ENCODE measurements at regions of chr6 and their contacts with region 1.

Region 1: GRCh38 chr6:43817192-43817591 is 47.2 kb downstream of the VEGFA start:
- DNase-seq: peak; percentile 27 to 61
- H3K4me3 ChIP-seq: no peak overlapping the region
- H3K27ac ChIP-seq: no peak overlapping the region
- H3K4me1 ChIP-seq: no peaks in the 10 kb centered on the region
- H3K27me3 ChIP-seq: no peaks in the 10 kb centered on the region
- CTCF ChIP-seq: peak; percentile 70 to 76 (median 73)
- EP300 ChIP-seq: no peak
- POLR2A ChIP-seq: no peak
- RAD21 ChIP-seq: peak; percentile 49 to 61

Region 2: DNA sequence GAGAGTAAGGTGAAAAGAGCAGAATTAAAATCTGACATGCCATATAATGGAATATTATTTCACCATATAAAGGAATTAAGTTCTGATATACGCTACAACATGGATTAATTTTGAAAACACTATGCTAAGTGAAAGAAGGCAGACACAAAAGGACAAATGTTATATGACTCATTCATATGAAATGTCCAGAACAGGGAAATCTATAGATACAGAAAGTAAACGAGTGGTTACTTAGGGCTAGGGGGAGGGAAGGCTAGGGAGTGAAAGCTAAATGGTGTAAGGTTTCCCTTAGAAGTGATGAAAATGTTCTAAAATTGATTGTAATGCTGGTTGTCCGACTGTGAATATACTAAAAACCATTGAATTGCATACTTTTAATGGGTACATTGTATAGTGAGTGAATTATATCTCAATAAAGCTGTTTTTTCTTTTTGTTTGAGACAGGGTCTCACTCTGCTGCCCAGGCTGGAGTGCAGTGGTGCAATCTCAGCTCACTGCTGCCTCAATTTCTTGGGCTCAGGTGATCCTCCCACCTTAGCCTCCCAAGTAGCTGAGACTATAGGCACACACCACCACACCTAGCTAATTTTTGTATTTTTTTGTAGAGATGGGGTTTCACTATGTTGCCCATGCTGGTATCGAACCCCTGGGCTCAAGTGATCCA is 1103.0 kb before region 1 on chr6:
- CTCF ChIA-PET with region 1: no interaction called
- POLR2A ChIA-PET with region 1: no interaction called
- DNase-seq: no peak
- H3K4me3 ChIP-seq: no peak overlapping the region
- H3K27ac ChIP-seq: no peak overlapping the region
- H3K4me1 ChIP-seq: peaks cover 2 to 7% (median 4%) of the 10 kb centered on the region in 4 experiments; a peak in 4 of 7 replicates
- H3K27me3 ChIP-seq: no peaks in the 10 kb centered on the region; a peak in 1 of 7 replicates
- CTCF ChIP-seq: no peak
- EP300 ChIP-seq: no peak
- POLR2A ChIP-seq: no peak
- RAD21 ChIP-seq: no peak

Region 3: DNA sequence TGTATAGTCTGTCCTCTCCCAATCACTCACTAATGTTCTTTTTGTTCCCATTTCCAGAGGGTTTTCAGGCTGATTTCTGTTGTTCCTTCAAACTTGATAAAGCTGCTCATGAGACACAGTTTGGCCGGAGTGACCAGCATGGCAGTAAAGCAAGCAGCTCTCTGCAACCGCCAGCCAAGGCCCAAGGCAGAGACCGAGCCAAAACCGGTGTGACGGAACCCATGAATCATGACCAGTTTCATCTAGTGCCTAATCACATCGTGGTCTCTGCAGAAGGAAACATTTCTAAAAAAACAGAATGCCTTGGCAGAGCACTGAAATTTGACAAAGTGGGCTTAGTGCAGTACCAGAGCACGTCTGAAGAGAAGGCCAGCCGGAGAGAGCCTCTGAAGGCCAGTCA is 952.6 kb before region 1 on chr6:
- CTCF ChIA-PET with region 1: no interaction called
- POLR2A ChIA-PET with region 1: no interaction called
- DNase-seq: no peak
- H3K4me3 ChIP-seq: no peak overlapping the region
- H3K27ac ChIP-seq: no peak overlapping the region
- H3K4me1 ChIP-seq: no peaks in the 10 kb centered on the region
- H3K27me3 ChIP-seq: no peaks in the 10 kb centered on the region
- CTCF ChIP-seq: no peak
- EP300 ChIP-seq: no peak
- POLR2A ChIP-seq: no peak
- RAD21 ChIP-seq: no peak

Region 4: DNA sequence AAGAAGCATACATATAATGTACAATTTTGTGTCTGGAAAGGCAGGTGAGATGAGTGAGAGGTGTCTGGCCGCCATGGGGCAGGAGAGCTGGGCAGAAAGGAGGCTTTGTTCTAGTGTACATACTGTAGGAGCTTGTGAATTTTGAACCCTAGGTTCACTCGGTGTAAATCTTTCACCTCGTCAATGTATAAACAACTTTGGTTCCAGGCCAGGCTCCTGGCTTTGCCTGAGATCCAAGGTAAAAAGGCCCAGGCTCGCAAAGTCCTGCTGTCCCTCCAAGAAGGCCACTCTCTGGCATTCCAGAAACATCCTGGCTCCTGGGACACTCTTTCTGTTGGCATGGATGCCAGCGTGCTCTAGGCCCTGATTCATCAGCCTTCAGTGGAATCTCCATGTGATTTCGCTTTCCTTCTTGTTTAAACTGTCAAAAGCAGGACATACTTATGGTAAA is 526.3 kb before region 1 on chr6:
- CTCF ChIA-PET with region 1: no interaction called
- POLR2A ChIA-PET with region 1: no interaction called
- DNase-seq: no peak
- H3K4me3 ChIP-seq: no peak overlapping the region
- H3K27ac ChIP-seq: no peak overlapping the region
- H3K4me1 ChIP-seq: peaks cover 0 to 8% (median 6%) of the 10 kb centered on the region in 4 experiments; a peak in 4 of 7 replicates
- H3K27me3 ChIP-seq: peaks cover 0 to 9% (median 5%) of the 10 kb centered on the region in 4 experiments; a peak in 5 of 7 replicates
- CTCF ChIP-seq: no peak
- EP300 ChIP-seq: no peak
- POLR2A ChIP-seq: no peak
- RAD21 ChIP-seq: no peak

Region 5: DNA sequence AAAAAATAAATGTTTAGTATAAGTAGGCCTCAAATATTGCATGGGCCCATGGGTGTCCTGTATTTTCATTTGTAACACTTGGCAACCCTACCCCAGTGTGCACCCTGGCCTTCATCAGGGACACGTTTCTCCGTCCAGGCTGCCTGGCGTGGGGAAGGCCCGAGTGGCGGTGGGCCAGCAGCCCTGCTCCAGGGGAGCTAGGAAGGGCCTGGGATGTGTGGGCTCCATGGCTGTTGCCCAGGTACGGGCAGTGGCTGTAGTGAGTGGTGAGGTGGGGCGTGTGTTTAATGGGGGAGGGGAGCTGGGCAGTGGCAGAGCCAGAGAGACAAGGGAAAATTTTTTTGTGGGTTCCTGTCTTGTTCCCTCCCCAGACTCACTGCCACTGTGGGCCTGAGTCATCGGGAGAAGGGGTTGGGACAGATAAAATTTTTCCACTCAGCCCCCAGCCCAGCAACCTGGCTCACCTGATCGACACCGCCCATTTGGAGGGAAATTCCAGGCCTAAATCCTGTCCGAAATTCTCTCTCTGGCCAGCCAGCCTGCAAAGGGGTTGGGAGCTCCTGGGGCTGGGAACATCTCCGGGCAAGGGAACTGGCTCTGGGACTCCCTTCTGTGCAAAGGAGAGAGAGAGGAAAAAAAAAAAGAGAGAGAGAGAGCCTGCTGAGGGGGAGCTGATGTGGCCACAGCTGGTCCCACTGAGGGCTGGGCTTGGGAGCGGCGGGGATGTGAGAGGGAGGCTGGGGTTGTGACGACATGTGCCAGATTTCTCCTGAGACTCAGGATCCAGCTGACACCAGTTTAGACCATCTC is 79.7 kb before region 1 on chr6:
- CTCF ChIA-PET with region 1: no interaction called
- POLR2A ChIA-PET with region 1: no interaction called
- DNase-seq: no peak
- H3K4me3 ChIP-seq: no peak overlapping the region
- H3K27ac ChIP-seq: no peak overlapping the region; the same call in 1 of the 2 replicates
- H3K4me1 ChIP-seq: peaks cover 0 to 19% (median under 1%) of the 10 kb centered on the region in 4 experiments; a peak in 3 of 7 replicates
- H3K27me3 ChIP-seq: no peaks in the 10 kb centered on the region
- CTCF ChIP-seq: no peak
- EP300 ChIP-seq: no peak
- POLR2A ChIP-seq: no peak
- RAD21 ChIP-seq: no peak

Region 6: DNA sequence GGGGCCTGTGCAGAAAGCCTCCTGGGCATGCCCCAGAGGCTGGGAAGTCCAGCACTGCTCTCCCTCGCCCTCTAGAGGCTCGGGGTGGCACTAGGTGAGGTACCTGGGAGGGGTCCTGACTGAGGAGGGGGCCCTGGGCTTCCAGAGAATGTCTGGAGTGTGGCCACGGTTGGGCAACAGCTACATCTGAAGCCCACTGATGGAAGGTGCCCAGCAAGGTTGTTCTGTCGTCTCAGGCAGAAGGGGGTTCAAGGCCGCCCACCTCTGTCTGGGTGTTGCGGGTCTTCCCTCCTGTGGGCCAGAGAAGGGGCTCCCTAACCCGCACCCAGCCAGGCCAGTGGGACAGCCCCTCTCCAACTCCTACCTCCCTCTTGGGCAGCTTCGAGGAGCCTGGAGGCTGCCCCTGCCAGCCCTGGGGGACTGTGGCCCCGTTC is 58.6 kb before region 1 on chr6:
- CTCF ChIA-PET with region 1: interaction called, 10 read pairs
- POLR2A ChIA-PET with region 1: no interaction called
- DNase-seq: peak in 1 of 2 experiments; percentile 91
- H3K4me3 ChIP-seq: no peak overlapping the region
- H3K27ac ChIP-seq: no peak overlapping the region
- H3K4me1 ChIP-seq: peaks cover 0 to 9% (median 5%) of the 10 kb centered on the region in 4 experiments; a peak in 5 of 7 replicates
- H3K27me3 ChIP-seq: no peaks in the 10 kb centered on the region
- CTCF ChIP-seq: peak; percentile 87 to 95 (median 94)
- EP300 ChIP-seq: no peak
- POLR2A ChIP-seq: no peak
- RAD21 ChIP-seq: peak; percentile 81 to 88

Region 7: DNA sequence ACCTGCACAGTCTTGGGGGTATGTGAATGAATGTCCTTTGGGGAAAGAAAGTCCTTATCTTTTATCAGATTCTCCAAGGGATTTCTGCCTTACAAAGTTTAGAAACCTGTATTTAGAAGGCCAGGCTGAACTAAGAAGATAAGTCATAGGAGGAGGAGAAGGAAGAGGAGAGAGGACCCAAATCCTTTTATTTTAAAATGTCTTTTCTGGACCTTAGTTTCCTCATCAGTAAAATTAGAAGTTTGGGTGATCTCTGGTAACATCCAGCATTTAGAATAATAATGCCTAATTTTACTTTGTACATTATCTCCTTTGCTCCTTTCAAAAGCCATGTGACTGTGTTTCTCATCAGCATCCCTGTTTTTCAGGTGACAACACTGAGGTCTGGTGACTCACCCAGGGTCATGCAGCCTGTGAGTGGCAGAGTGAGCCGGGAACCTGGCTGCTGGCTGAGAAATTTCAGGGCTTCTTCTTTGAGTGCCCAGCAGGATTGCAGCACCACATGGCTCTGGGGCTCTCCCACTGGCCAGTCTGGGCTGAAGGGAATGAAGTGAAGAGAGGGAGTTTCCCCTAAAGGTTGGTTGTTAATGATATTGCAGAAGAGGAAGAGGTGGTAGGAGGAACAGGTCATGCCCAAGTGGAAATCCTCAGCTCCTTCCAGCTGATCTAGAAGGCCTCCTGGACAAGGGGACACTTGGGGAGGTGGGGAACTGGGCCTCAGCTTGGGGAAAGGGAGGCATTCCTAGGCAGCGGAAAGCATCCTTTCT is 13.2 kb before region 1 on chr6:
- CTCF ChIA-PET with region 1: interaction called, 25 read pairs
- POLR2A ChIA-PET with region 1: interaction called, 3 read pairs
- DNase-seq: no peak
- H3K4me3 ChIP-seq: no peak overlapping the region
- H3K27ac ChIP-seq: no peak overlapping the region
- H3K4me1 ChIP-seq: no peaks in the 10 kb centered on the region; a peak in 1 of 7 replicates
- H3K27me3 ChIP-seq: no peaks in the 10 kb centered on the region; a peak in 1 of 7 replicates
- CTCF ChIP-seq: no peak
- EP300 ChIP-seq: no peak
- POLR2A ChIP-seq: no peak
- RAD21 ChIP-seq: no peak

Region 8: GRCh38 chr6:43833223-43833995 is 16.2 kb after region 1 on chr6:
- CTCF ChIA-PET with region 1: interaction called, 32 read pairs
- POLR2A ChIA-PET with region 1: no interaction called
- DNase-seq: no peak
- H3K4me3 ChIP-seq: no peak overlapping the region
- H3K27ac ChIP-seq: no peak overlapping the region
- H3K4me1 ChIP-seq: peaks cover 0 to 3% (median under 1%) of the 10 kb centered on the region in 4 experiments; a peak in 2 of 7 replicates
- H3K27me3 ChIP-seq: no peaks in the 10 kb centered on the region
- CTCF ChIP-seq: no peak
- EP300 ChIP-seq: no peak
- POLR2A ChIP-seq: no peak
- RAD21 ChIP-seq: no peak

Region 9: GRCh38 chr6:43856005-43856765 is 39.0 kb after region 1 on chr6:
- CTCF ChIA-PET with region 1: interaction called, 12 read pairs
- POLR2A ChIA-PET with region 1: no interaction called
- DNase-seq: no peak
- H3K4me3 ChIP-seq: no peak overlapping the region
- H3K27ac ChIP-seq: no peak overlapping the region
- H3K4me1 ChIP-seq: peaks cover 0 to 6% (median 3%) of the 10 kb centered on the region in 4 experiments; a peak in 4 of 7 replicates
- H3K27me3 ChIP-seq: no peaks in the 10 kb centered on the region
- CTCF ChIP-seq: peak; percentile 42 to 71 (median 57); a peak in 3 of 4 replicates
- EP300 ChIP-seq: no peak
- POLR2A ChIP-seq: no peak
- RAD21 ChIP-seq: peak; percentile 35 to 58; a peak in 3 of 4 replicates

Region 10: GRCh38 chr6:43883847-43884651 is 66.9 kb after region 1 on chr6:
- CTCF ChIA-PET with region 1: interaction called, 11 read pairs
- POLR2A ChIA-PET with region 1: no interaction called
- DNase-seq: no peak
- H3K4me3 ChIP-seq: no peak overlapping the region
- H3K27ac ChIP-seq: no peak overlapping the region
- H3K4me1 ChIP-seq: peaks cover 0 to 4% (median 0%) of the 10 kb centered on the region in 4 experiments; a peak in 2 of 7 replicates
- H3K27me3 ChIP-seq: peaks cover 0 to 2% (median 0%) of the 10 kb centered on the region in 4 experiments; a peak in 1 of 7 replicates
- CTCF ChIP-seq: no peak
- EP300 ChIP-seq: no peak
- POLR2A ChIP-seq: no peak
- RAD21 ChIP-seq: no peak